ENCODE measurements at regions of chr2 and their contacts with region 1.

Region 1: DNA sequence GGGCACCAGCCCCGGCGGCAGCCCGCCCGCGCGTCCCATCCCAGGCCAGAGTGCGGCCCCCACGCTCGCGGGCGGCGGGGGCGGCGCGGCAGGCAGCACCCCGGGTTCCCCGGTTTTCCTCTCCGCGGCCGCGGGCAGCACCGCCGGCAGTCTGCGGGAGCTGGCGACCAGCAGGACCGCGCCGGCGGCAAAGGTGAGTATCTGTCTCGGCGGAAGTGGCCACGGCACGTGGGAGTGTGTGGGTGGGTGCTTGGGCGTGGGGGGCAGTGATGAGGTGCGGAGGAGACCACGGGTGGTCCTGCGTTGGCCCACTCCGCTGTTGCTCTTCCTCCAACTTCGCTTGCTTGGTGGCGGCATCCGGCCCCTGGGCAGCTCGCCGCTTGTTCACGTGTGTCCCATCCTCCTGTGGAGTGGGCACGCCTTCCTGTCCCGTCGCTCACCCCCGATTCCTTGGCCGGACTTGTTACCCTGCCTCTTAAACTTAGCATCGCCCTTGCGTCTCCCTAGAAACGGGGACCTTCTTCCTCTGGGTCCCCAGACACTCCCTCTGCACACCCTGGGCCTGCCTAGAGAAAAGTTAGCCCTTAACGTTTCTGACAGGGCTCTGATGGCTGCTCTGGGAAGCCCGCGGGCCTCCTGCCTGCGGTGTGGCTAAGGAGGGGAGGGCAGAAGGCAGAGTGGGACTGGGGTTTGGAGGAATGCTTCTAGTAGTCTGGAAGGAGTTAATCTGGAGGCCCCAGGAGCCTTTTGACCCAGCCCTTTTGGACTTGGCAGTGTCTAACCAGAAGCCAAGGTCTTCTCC is 1.1 kb downstream of the SH3RF3 start:
- DNase-seq: peak; percentile 43
- CTCF ChIP-seq: no peak

Region 2: DNA sequence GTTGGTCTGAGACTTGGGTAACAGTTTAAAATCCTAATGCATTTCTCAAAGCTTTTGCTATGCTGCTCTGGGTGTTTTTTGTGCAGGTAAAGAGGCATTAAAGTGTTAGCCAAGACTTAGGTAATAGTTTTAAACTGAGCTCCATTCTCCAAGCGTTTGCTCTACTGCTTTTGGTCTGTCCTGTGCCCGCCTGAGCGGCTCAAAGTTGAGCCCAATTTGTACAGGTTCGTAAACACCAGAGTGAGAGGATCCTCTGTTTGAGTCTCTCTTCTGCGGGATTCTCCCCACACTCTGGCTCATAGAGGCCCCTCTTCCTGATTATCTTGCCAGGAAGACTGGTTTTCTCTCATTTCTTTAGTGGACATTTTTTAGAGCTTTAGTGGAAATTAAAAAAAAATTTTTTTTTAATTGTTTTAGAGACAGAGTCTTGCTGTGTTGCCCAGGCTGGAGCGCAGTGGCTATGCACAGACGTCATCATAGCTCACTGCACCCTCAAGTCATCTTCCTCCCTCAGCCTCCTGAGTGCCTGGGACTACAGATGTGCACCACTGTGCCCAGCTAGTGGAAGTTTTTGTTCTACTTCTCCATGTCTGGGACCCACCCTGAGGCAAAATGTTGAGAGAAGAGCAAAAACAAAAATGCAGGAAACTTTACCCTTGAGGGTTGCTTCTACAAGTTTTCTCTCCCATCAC is 326.9 kb before region 1 on chr2:
- in situ Hi-C with region 1: no loop called
- DNase-seq: no peak
- CTCF ChIP-seq: no peak

Region 3: DNA sequence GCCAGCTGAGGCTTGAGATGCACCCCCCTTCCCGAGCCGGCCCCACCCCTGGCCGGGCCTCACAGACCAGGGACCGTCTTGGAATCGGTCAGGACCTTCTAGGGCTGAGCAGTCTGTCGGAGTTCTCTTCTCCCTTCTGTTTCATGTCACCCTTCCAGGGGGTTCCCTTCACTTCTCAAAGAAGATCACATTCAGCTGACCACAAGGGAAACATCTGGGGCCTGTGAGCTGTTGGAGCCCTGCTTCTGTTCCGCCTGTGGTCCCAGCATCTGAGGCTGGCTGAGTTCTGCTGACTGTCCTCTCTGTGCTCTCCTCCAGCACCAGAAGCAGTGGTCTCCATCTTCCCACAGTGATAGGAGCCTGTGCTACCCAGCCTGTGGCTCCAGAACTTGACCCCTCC is 377.1 kb after region 1 on chr2:
- in situ Hi-C with region 1: loop called (anchors 10 kb)
- DNase-seq: no peak
- CTCF ChIP-seq: no peak

Measured in GM13977 (cell line).